Right ventricle myocardium inferior (tissue), 1 donor: ENCODE measurements at regions of chrX and their contacts with region 1.

Region 1: GRCh38 chrX:96182366-96182765 is 502.3 kb upstream of the DIAPH2 start:
- DNase-seq: no peak
- ATAC-seq: no peak

Region 2: GRCh38 chrX:95764972-95765451 is 417.4 kb before region 1 on chrX:
- intact Hi-C with region 1: loop called (anchors 10 kb)
- DNase-seq: no peak
- ATAC-seq: no peak

Region 3: GRCh38 chrX:96394598-96394997 is 212.2 kb after region 1 on chrX:
- intact Hi-C with region 1: no loop called
- DNase-seq: no peak
- ATAC-seq: no peak